ENCODE measurements at regions of chr3 and their contacts with region 1.

Region 1: GRCh38 chr3:121818578-121818977 is 16.3 kb downstream of the IQCB1 start:
- DNase-seq: no peak
- H3K4me3 ChIP-seq: no peak overlapping the region
- H3K27ac ChIP-seq: no peak overlapping the region
- H3K4me1 ChIP-seq: no peaks in the 10 kb centered on the region
- H3K27me3 ChIP-seq: no peaks in the 10 kb centered on the region
- CTCF ChIP-seq: no peak

Region 2: GRCh38 chr3:121724130-121724529 is 94.4 kb before region 1 on chr3:
- CTCF ChIA-PET with region 1: no interaction called
- POLR2A ChIA-PET with region 1: no interaction called
- intact Hi-C with region 1: no loop called
- DNase-seq: no peak
- H3K4me3 ChIP-seq: no peak overlapping the region
- H3K27ac ChIP-seq: no peak overlapping the region
- H3K4me1 ChIP-seq: no peaks in the 10 kb centered on the region
- H3K27me3 ChIP-seq: no peaks in the 10 kb centered on the region
- CTCF ChIP-seq: no peak

Region 3: DNA sequence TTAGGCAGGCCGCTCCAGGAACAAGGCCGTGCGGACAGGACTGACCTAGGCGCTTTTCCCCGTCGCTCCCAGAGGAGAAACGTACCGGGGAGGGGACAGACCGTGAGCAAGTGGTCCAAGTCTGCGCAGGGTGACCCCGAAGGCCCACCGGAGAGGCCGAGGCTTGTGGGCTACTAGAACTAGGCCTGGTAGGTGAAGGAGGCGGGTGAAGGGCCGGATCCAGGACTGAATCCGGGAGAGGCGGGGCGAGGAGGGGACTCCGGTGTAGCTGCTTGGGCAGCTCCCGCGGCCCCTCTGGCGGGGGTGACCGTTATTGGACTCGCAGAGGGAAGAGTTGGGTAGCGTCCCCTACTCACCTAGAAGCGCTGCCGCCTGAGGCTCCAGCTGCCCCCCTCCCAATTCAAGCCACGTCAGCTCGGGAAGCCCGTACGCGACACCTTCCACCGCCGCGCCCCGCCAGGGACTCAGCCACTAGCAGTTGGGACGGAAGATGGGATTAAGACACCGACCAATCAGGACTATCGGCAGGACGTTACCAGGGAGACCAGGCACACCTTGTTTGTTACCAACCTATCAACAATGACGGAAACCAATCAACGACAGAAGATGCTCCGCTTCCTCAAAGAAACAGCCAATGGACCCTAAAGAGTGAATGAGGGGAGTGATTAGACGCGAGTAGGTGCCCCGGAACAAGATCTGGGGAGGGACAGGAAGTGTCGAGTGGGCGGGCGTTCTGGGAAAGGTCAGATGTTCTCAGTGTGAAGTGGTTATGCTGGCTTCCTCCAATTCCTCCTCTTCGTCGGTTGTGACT is 69.1 kb before region 1 on chr3 and contains the start of gene GOLGB1:
- CTCF ChIA-PET with region 1: no interaction called
- POLR2A ChIA-PET with region 1: interaction called, 19 read pairs
- intact Hi-C with region 1: no loop called
- DNase-seq: peak; percentile 99
- H3K4me3 ChIP-seq: peak within 1 kb of the TSS; percentile 82
- H3K27ac ChIP-seq: peak within 1 kb of the TSS; percentile 82
- H3K4me1 ChIP-seq: peaks cover 7% of the 10 kb centered on the region
- H3K27me3 ChIP-seq: no peaks in the 10 kb centered on the region
- CTCF ChIP-seq: no peak
- total RNA-seq, gene GOLGB1: 19.9 and 28.4 TPM in 2 replicates

Measured in A673 (cell line).